ENCODE measurements at regions of chr12 and their contacts with region 1.

Region 1: GRCh38 chr12:76348079-76348901 is at the start of gene BBS10:
- DNase-seq: peak; percentile 71 to 92 (median 88)
- ATAC-seq: peak; percentile 96
- H3K4me3 ChIP-seq: peak within 1 kb of the TSS; percentile 76 to 78
- H3K4me3 Mint-ChIP-seq: peak within 1 kb of the TSS; percentile 96
- H3K27ac ChIP-seq: peak within 1 kb of the TSS; percentile 56 to 81
- H3K27ac Mint-ChIP-seq: peak within 1 kb of the TSS; percentile 93
- H3K4me1 ChIP-seq: peaks cover 14% of the 10 kb centered on the region
- H3K4me1 Mint-ChIP-seq: peaks cover 29% of the 10 kb centered on the region
- H3K27me3 ChIP-seq: no peaks in the 10 kb centered on the region
- H3K27me3 Mint-ChIP-seq: no peaks in the 10 kb centered on the region
- CTCF ChIP-seq: peak; percentile 11
- total RNA-seq, gene BBS10: 1.4 to 1.5 TPM

Region 2: DNA sequence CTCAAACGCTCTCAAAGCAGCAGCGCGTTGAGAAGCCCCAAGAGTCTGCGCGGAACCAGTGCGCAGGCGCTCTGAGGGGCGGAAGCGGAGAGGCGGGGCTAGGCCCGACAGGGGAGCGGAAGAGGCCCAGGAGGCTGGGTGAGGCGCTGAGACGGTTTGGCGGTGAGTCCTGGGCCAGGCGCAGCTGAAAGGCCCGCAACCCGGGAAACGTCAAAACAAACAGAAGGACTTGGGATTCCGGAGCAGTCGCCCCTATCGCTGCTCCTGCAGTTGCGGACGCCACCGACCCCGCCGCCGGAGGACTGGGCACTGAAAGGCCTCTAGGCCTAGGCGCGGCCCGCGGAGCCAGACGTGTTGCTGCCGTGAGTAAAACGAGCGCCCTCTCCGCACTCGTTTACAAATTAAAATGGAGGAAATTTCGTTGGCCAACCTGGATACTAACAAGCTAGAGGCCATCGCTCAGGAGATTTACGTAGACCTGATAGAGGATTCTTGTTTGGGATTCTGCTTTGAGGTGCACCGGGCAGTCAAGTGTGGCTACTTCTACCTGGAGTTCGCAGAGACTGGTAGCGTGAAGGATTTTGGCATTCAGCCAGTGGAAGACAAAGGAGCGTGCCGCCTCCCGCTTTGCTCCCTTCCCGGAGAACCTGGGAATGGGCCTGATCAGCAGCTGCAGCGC is 1810.4 kb before region 1 on chr12 and contains the start of gene ATXN7L3B:
- CTCF ChIA-PET with region 1: no interaction called
- POLR2A ChIA-PET with region 1: no interaction called
- intact Hi-C with region 1: loop called in 1 of 2 experiments (anchors 5 kb)
- DNase-seq: peak; percentile 92 to 97 (median 96)
- ATAC-seq: peak; percentile 94
- H3K4me3 ChIP-seq: peak within 1 kb of the TSS; percentile 80 to 86
- H3K4me3 Mint-ChIP-seq: peak within 1 kb of the TSS; percentile 88
- H3K27ac ChIP-seq: peak within 1 kb of the TSS; percentile 94 to 96
- H3K27ac Mint-ChIP-seq: peak within 1 kb of the TSS; percentile 95
- H3K4me1 ChIP-seq: peaks cover 43% of the 10 kb centered on the region
- H3K4me1 Mint-ChIP-seq: peaks cover 53% of the 10 kb centered on the region
- H3K27me3 ChIP-seq: no peaks in the 10 kb centered on the region
- H3K27me3 Mint-ChIP-seq: no peaks in the 10 kb centered on the region
- CTCF ChIP-seq: no peak
- total RNA-seq, gene ATXN7L3B: 31.9 to 33.2 TPM

Region 3: DNA sequence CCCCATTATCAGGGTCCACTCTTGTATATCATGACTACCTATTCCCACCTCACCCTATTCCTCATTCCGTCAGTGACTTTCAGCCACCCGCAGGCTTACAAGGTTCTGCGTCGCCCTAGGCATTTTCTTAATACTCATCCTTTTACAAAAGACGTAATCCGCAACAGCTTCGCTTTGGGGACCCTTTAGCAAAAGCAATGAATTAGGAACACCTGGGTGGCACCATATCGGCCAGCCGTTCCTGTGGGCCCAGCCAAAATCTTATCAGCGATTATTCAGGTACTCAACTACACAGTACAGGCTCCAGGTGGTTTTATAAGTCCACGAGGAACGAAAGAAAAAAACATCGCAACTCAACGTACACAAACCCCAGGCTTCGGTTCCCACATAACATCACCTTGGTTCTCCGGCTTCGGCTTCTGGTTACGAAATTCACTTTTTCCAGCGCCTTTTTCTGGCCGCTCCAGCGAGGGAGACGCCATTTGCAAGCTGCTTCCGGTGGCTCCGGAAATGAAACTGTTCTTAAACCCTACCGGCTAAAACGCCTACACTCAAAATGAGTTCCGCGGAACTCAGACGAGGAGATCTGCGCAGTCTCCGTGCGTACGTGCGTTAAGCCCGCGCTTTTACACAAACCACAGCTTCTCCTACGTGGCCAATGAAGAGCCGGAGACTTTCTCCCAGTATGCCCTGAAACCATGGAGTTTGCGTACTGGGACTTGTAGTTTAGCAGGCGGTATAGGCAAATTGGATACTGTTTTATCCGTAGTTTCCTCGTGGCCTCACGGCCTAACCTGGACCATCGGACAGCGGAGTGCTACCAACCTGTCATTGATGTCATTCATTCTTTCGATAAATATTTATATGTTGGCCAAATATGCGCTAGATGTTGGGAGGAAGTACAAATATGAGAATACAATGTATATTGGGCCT is 836.9 kb before region 1 on chr12 and contains the start of gene KRR1:
- CTCF ChIA-PET with region 1: no interaction called
- POLR2A ChIA-PET with region 1: no interaction called
- intact Hi-C with region 1: loop called (anchors 1 to 2 kb)
- DNase-seq: peak; percentile 75 to 98 (median 88)
- ATAC-seq: peak; percentile 95
- H3K4me3 ChIP-seq: peak within 1 kb of the TSS; percentile 89 to 93
- H3K4me3 Mint-ChIP-seq: peak within 1 kb of the TSS; percentile 98
- H3K27ac ChIP-seq: peak within 1 kb of the TSS; percentile 89
- H3K27ac Mint-ChIP-seq: peak within 1 kb of the TSS; percentile 98
- H3K4me1 ChIP-seq: peaks cover 18% of the 10 kb centered on the region
- H3K4me1 Mint-ChIP-seq: peaks cover 33% of the 10 kb centered on the region
- H3K27me3 ChIP-seq: no peaks in the 10 kb centered on the region
- H3K27me3 Mint-ChIP-seq: no peaks in the 10 kb centered on the region
- CTCF ChIP-seq: no peak
- total RNA-seq, gene KRR1: 158 to 161 TPM

Region 4: DNA sequence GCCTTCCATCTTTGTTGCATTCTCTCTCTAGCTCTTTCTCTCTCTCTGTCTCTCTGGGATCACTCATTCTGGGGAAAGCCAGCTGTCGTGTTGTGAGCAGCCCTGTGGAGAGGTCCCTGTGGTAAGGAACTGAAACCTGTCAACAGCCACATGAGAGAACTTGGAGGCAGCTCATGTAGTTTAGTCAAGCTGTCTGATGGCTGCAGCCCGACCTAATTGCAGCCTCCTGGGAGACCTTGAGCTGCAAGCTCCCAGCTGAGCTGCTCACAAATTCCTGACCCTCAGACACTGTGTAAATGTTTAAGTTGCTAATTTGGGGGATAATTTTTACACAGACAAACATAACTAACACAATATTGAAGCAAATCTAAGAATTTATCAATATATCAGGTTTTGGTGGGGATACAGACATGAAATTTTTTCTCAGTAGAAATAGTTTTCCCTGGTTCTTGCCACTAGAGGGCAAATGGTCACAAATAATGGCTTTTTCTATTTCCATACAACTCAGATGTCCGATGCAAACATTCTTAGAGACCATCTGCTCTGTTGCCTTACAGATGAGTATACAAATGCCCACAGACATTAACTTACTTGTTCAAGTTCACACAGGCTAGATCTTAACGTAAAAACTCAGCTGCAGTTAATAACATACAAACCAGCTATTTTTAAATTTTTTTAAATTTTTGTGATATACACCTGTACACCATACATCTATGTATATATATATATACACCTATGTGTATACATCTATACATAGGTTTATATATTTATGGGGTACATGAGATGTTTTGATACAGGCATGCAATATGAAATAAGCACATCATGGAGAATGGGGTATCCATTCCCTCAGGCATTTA is 821.4 kb before region 1 on chr12:
- CTCF ChIA-PET with region 1: no interaction called
- POLR2A ChIA-PET with region 1: no interaction called
- intact Hi-C with region 1: loop called in 1 of 2 experiments (anchors 5 kb)
- DNase-seq: peak in 2 of 9 experiments; percentile 45 to 60
- ATAC-seq: no peak
- H3K4me3 ChIP-seq: no peak overlapping the region
- H3K4me3 Mint-ChIP-seq: no peak overlapping the region
- H3K27ac ChIP-seq: no peak overlapping the region
- H3K27ac Mint-ChIP-seq: no peak overlapping the region
- H3K4me1 ChIP-seq: no peaks in the 10 kb centered on the region
- H3K4me1 Mint-ChIP-seq: peaks cover 1% of the 10 kb centered on the region
- H3K27me3 ChIP-seq: peaks cover 0 to 4% of the 10 kb centered on the region in 2 experiments
- H3K27me3 Mint-ChIP-seq: peaks cover 17% of the 10 kb centered on the region
- CTCF ChIP-seq: peak; percentile 60

Region 5: DNA sequence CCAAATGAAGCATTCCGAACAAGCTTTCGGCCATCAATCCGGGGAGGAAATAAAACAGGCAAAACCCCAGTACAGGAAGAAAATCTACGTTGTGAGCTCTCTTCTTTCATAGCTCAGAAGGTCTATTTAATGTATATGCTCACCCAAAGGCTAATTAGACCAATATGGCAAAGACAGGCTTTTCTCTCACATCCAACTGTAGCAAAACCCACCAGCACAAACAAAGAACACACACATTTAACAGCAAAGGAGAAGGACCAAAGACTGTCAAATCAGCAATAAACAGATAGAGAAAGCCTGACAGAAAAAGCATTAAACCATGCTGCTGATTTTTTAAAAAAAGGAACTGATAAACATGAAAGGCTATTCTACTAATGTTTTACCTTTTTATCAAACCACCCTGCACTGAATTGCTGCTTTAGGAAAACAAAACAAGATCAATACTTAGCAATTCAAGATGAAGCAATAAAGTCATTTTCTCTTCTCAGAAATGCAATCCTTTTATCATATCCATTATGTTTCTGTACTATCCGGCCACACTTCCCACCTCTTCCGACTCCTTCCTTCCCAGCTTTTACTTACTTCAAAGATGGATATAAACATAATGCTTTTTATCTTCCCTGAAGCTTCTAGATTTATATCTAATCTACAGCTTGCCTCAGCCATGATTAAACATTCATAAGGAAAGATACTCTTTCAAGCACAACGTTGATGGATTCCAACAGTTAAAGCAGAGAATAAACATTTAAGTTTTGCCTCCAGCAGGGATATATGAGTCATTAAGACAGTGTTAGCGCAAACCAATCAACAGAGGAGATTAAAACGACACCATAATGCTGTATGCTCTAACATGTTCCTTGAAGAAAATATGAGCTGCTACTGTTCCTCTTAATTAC is 74.5 kb after region 1 on chr12:
- CTCF ChIA-PET with region 1: no interaction called
- POLR2A ChIA-PET with region 1: no interaction called
- intact Hi-C with region 1: no loop called
- DNase-seq: no peak
- ATAC-seq: no peak
- H3K4me3 ChIP-seq: no peak overlapping the region
- H3K4me3 Mint-ChIP-seq: no peak overlapping the region
- H3K27ac ChIP-seq: no peak overlapping the region
- H3K27ac Mint-ChIP-seq: no peak overlapping the region
- H3K4me1 ChIP-seq: no peaks in the 10 kb centered on the region
- H3K4me1 Mint-ChIP-seq: peaks cover 26% of the 10 kb centered on the region
- H3K27me3 ChIP-seq: no peaks in the 10 kb centered on the region
- H3K27me3 Mint-ChIP-seq: no peaks in the 10 kb centered on the region
- CTCF ChIP-seq: no peak

Region 6: DNA sequence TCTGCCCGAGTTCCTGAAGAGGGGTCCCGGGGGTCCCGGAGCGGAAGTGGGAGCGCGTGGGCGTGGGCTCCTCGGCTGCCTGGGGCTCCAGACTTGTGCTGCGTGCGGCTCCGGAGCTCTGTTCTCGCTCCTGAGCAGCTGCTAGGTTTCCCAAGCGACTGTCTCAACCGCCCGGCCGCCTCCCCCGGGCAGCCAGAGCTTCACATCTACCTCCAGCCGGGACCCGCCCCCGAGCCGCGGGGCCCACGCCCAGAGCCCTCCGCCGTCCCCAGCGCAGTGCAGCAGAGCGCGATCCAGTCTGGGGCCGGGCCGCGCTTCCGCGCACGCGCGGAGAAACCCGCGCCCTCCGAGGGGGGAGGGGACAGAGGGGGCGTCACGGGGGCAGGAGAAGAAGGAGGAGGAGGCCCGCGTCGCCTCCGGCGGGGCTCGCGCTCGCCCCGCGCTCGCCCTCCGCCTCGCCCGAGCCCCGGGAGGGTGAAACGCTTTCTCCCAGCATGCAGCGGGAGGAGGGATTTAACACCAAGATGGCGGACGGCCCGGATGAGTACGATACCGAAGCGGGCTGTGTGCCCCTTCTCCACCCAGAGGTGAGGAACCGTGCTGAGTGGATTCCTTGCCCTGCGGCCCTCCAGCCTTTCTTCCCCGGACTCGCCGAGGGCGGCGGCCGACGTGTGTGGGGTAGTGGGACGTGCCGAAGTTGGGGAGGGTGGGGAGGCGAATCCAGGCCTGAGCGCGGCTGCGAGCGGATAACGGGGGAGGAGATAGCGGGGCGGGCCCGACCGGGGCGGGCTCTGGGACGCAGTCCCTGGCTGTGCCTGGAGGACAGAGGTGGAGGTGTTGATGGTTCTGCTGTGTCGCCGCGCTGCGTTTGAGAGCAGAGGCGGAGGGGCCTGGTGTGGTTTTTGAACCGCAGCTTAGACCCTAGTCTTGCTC is 415.7 kb after region 1 on chr12 and contains the start of gene ZDHHC17:
- CTCF ChIA-PET with region 1: no interaction called
- POLR2A ChIA-PET with region 1: interaction called, 3 read pairs
- intact Hi-C with region 1: loop called (anchors 1 to 5 kb)
- DNase-seq: peak; percentile 89 to 96 (median 93)
- ATAC-seq: peak; percentile 82
- H3K4me3 ChIP-seq: peak within 1 kb of the TSS; percentile 73 to 99
- H3K4me3 Mint-ChIP-seq: peak within 1 kb of the TSS; percentile 98
- H3K27ac ChIP-seq: peak within 1 kb of the TSS; percentile 87 to 94
- H3K27ac Mint-ChIP-seq: peak within 1 kb of the TSS; percentile 99
- H3K4me1 ChIP-seq: peaks cover 26% of the 10 kb centered on the region
- H3K4me1 Mint-ChIP-seq: peaks cover 47% of the 10 kb centered on the region
- H3K27me3 ChIP-seq: no peaks in the 10 kb centered on the region
- H3K27me3 Mint-ChIP-seq: no peaks in the 10 kb centered on the region
- CTCF ChIP-seq: no peak
- total RNA-seq, gene ZDHHC17: 38.1 to 40.3 TPM